PC-3 (cell line): ENCODE measurements at regions of chr3 and their contacts with region 1.

Region 1: GRCh38 chr3:23999012-23999641 is 54.0 kb downstream of the NR1D2 start:
- DNase-seq: peak; percentile 86
- ATAC-seq: peak; percentile 55
- H3K4me3 ChIP-seq: no peak overlapping the region
- H3K27ac ChIP-seq: no peak overlapping the region
- H3K4me1 ChIP-seq: no peaks in the 10 kb centered on the region
- H3K27me3 ChIP-seq: no peaks in the 10 kb centered on the region
- CTCF ChIP-seq: peak; percentile 98

Region 2: DNA sequence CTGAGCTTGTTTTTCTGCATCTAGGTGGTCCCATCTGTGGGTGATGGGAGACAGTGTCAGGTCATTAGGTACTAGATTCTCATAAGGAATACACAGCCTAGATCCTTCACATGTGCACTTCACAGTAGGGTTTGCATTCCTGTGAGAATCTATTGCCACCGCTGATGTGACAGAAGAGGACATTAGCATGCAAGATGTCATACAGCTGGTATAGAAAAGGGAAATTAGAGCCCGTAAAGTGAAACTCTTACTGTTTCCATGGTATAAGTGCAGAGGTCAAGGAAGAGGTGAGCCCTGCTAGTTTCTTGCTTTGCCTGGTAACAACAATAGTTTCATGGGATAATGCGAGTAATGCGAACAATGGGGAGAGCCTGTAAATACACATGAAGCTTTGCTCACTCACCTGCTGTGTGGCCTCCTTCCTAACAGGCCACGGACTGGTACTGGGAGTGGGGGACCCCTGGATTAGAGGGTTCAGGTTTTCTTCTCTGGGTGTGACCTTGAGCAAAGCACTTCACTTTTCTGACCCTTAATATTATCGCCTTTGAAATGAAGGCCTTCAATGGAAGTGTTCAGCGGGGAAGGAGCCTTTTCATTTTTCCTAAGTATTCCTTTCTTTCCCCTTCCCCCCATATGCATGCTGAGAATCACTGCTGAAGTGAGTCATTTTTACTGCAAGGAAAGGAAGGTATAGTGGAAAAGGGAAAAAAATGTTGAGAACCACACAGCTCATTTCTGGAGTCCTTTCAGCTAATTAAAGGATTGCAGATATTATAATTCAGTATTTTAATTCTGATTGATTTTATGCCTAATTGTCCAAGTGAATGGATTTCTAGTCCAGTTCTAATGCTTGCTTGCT is 509.6 kb before region 1 on chr3:
- CTCF ChIA-PET with region 1: no interaction called
- POLR2A ChIA-PET with region 1: interaction called, 17 read pairs
- intact Hi-C with region 1: no loop called
- DNase-seq: peak; percentile 41
- ATAC-seq: peak; percentile 76
- H3K4me3 ChIP-seq: peak overlapping the region; percentile 17; the same call in 1 of the 2 replicates
- H3K27ac ChIP-seq: peak overlapping the region; percentile 76
- H3K4me1 ChIP-seq: peaks cover 22% of the 10 kb centered on the region
- H3K27me3 ChIP-seq: no peaks in the 10 kb centered on the region
- CTCF ChIP-seq: no peak

Region 3: DNA sequence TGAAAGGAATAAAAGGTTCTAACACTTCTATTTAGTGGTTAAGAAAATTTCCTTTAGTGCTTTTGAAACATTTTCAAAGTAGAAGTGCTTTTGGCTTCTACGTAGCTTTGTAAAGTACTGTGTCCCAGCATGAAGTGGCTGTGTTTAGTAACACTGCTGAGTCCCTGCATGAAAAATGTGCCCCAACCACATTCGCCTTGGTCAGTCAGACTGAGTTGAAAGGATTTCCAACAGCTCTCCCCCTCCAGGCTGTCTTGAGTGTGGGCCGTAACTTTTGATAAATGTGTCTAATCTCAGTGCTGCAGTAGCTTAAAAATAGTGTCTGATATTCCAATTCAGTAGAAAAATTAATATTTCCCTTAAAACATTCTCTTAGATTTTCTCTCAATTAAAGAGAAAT is 60.9 kb after region 1 on chr3:
- CTCF ChIA-PET with region 1: no interaction called
- POLR2A ChIA-PET with region 1: no interaction called
- intact Hi-C with region 1: no loop called
- DNase-seq: peak; percentile 56
- ATAC-seq: no peak
- H3K4me3 ChIP-seq: no peak overlapping the region
- H3K27ac ChIP-seq: no peak overlapping the region
- H3K4me1 ChIP-seq: no peaks in the 10 kb centered on the region
- H3K27me3 ChIP-seq: no peaks in the 10 kb centered on the region
- CTCF ChIP-seq: no peak

Region 4: GRCh38 chr3:24168977-24169376 is 169.8 kb after region 1 on chr3:
- CTCF ChIA-PET with region 1: no interaction called
- POLR2A ChIA-PET with region 1: no interaction called
- intact Hi-C with region 1: loop called (anchors 5 kb)
- DNase-seq: no peak
- ATAC-seq: no peak
- H3K4me3 ChIP-seq: no peak overlapping the region
- H3K27ac ChIP-seq: no peak overlapping the region
- H3K4me1 ChIP-seq: peaks cover 10% of the 10 kb centered on the region
- H3K27me3 ChIP-seq: no peaks in the 10 kb centered on the region
- CTCF ChIP-seq: no peak

Region 5: DNA sequence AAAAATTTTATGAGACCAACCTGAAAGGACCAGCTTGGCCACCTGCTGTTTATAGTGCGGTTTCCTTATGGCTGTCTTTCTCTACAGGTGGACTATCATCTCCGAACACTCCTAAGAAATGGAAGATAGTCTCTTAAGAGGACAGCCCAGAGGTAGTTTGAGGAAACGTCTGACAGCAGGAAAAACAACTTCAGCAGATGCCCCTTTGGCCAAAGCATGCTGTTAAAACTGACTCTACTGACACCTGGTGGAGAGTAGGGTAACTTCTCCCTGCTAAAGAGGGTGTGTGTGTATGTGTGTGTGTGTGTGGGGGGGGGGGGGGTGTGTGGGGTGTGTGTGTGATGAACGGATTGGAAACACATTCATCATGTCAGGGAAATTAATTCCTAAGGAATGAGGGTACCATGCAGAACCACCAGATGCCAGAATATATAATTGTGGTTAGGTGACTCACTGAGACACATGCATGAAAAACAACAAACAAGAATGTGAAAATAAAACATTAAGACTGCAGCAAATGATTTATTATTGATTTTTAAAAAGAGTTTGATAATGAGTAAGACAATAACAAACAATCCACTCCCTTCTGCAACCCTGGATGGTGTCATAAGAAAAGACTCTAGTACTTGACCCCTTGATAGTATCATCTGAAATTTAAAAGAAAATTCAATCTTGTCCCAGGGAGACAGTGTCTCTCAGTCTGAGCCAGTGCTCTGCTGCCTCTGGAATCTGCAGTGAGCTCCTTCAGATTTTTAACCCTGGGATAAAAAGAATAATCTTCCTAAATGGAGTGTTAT is 239.0 kb after region 1 on chr3:
- CTCF ChIA-PET with region 1: no interaction called
- POLR2A ChIA-PET with region 1: no interaction called
- intact Hi-C with region 1: loop called (anchors 1 kb)
- DNase-seq: peak; percentile 92
- ATAC-seq: peak; percentile 68
- H3K4me3 ChIP-seq: no peak overlapping the region
- H3K27ac ChIP-seq: peak overlapping the region; percentile 86
- H3K4me1 ChIP-seq: peaks cover 60% of the 10 kb centered on the region
- H3K27me3 ChIP-seq: no peaks in the 10 kb centered on the region
- CTCF ChIP-seq: peak; percentile 76

Region 6: GRCh38 chr3:25594007-25594502 is 1594.9 kb after region 1 on chr3:
- CTCF ChIA-PET with region 1: no interaction called
- POLR2A ChIA-PET with region 1: no interaction called
- intact Hi-C with region 1: loop called (anchors 2 kb)
- DNase-seq: peak; percentile 78
- ATAC-seq: peak; percentile 48
- H3K4me3 ChIP-seq: no peak overlapping the region
- H3K27ac ChIP-seq: no peak overlapping the region
- H3K4me1 ChIP-seq: no peaks in the 10 kb centered on the region
- H3K27me3 ChIP-seq: no peaks in the 10 kb centered on the region
- CTCF ChIP-seq: peak; percentile 91